Activated naive CD4-positive, alpha-beta T cell treated with anti-CD3 and anti-CD28 coated beads for 36 hours (primary cell): ENCODE measurements at regions of chr11 and their contacts with region 1.

Region 1: DNA sequence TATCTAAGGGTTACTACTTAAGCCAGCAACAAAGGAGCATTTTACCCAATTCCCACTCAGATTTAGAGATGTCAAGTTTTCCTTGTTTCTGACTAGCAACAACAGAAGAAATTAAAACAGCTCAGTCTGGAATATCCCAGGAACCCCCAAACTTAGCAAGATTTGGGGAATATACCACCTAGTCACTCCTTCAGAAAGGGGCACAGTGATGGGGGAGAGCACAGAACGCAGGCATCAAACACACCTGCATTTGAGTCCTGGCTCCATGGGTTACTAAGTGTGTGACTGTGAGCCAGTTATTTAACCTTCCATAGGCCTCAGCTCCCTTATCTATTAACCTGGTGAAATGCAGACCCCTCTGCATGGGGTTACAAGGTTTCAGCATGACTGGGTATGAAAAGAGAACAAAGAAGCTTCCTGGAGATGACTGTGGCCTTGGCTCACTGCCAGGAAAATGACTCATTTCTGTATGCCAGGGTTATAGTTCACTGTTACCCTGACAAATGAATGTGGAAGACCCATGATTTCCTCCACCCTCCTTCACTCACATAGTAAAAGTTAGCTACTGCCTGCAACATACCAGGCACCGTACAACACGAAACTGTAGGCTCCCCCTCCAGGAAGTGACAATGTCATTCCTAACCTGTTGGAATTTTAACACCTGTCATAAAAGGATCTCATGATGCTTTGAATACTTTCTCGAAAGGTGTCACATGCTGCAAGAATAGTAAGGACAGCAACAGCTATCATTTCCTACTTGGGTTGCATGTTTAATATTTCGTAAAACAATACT is 79.6 kb downstream of the ME3 start:
- DNase-seq: peak; percentile 98
- H3K4me3 Mint-ChIP-seq: no peak overlapping the region
- H3K27ac Mint-ChIP-seq: peak overlapping the region; percentile 86
- H3K4me1 Mint-ChIP-seq: peaks cover 70% of the 10 kb centered on the region
- H3K27me3 Mint-ChIP-seq: no peaks in the 10 kb centered on the region

Region 2: GRCh38 chr11:85752890-85753581 is 839.8 kb before region 1 on chr11:
- CTCF ChIA-PET with region 1: no interaction called
- intact Hi-C with region 1: loop called (anchors 1 kb)
- DNase-seq: peak; percentile 94
- H3K4me3 Mint-ChIP-seq: peak overlapping the region; percentile 57
- H3K27ac Mint-ChIP-seq: peak overlapping the region; percentile 97
- H3K4me1 Mint-ChIP-seq: peaks cover 95% of the 10 kb centered on the region
- H3K27me3 Mint-ChIP-seq: no peaks in the 10 kb centered on the region

Region 3: GRCh38 chr11:86068951-86069407 is 523.9 kb before region 1 on chr11 and contains the start of gene PICALM:
- CTCF ChIA-PET with region 1: no interaction called
- intact Hi-C with region 1: loop called (anchors 2 kb)
- DNase-seq: peak; percentile 99
- H3K4me3 Mint-ChIP-seq: peak within 1 kb of the TSS; percentile 95
- H3K27ac Mint-ChIP-seq: peak within 1 kb of the TSS; percentile 95
- H3K4me1 Mint-ChIP-seq: peaks cover 29% of the 10 kb centered on the region
- H3K27me3 Mint-ChIP-seq: no peaks in the 10 kb centered on the region
- total RNA-seq, gene PICALM: 38.6 to 42.3 TPM

Region 4: DNA sequence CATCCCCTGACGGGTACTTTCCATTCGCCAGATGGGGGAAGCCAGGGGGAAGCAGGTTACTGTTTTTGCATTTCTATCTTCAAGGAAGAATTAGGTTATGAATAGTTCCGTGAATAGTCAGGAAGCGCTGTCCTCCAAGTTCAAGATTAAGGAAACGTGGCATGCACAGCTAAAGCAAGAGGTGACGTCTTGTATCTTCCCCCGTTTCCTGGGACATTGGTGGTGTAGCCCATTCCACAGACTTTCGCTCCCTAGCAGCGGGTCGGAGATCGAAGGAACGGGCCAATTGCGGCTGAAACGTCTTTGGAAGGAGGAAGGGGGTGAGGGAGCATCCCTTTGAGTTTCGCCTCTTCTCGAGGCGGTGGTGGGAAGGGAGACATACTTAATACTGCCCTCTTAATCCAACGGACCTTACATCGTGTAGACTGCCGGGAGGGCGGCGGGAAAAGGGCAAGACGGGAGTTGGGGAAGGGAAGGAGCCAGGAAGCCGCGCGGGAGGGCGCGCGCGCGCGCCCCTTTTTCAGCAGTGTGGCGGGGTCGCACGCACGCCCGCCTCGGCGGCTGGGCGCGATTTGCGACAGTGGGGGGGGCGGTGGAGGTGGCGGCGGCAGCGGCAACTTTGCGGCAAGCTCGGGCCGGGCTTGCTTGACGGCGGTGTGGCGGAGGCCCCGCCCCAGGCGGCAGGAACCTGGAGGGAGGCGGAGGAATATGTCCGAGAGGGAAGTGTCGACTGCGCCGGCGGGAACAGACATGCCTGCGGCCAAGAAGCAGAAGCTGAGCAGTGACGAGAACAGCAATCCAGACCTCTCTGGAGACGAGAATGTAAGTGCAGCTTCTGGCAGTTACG is 348.1 kb before region 1 on chr11 and contains the start of gene EED:
- CTCF ChIA-PET with region 1: no interaction called
- intact Hi-C with region 1: loop called (anchors 5 kb)
- DNase-seq: peak; percentile 94
- H3K4me3 Mint-ChIP-seq: no peak within 1 kb of the TSS
- H3K27ac Mint-ChIP-seq: no peak within 1 kb of the TSS
- H3K4me1 Mint-ChIP-seq: peaks cover 35% of the 10 kb centered on the region
- H3K27me3 Mint-ChIP-seq: no peaks in the 10 kb centered on the region
- total RNA-seq, gene EED: 60.4 to 61.0 TPM

Region 5: GRCh38 chr11:86608251-86608799 is 15.5 kb after region 1 on chr11:
- CTCF ChIA-PET with region 1: interaction called, 46 read pairs
- intact Hi-C with region 1: no loop called
- DNase-seq: peak; percentile 70
- H3K4me3 Mint-ChIP-seq: no peak overlapping the region
- H3K27ac Mint-ChIP-seq: no peak overlapping the region
- H3K4me1 Mint-ChIP-seq: peaks cover 29% of the 10 kb centered on the region
- H3K27me3 Mint-ChIP-seq: no peaks in the 10 kb centered on the region

Region 6: GRCh38 chr11:86848861-86849260 is 256.0 kb after region 1 on chr11:
- CTCF ChIA-PET with region 1: no interaction called
- intact Hi-C with region 1: no loop called
- DNase-seq: no peak
- H3K4me3 Mint-ChIP-seq: no peak overlapping the region
- H3K27ac Mint-ChIP-seq: no peak overlapping the region
- H3K4me1 Mint-ChIP-seq: no peaks in the 10 kb centered on the region
- H3K27me3 Mint-ChIP-seq: peaks cover 1% of the 10 kb centered on the region

Region 7: GRCh38 chr11:87037450-87038234 is 444.8 kb after region 1 on chr11 and contains the start of gene TMEM135:
- CTCF ChIA-PET with region 1: no interaction called
- intact Hi-C with region 1: loop called (anchors 1 kb)
- DNase-seq: peak; percentile 95
- H3K4me3 Mint-ChIP-seq: peak within 1 kb of the TSS; percentile 98
- H3K27ac Mint-ChIP-seq: peak within 1 kb of the TSS; percentile 88
- H3K4me1 Mint-ChIP-seq: peaks cover 32% of the 10 kb centered on the region
- H3K27me3 Mint-ChIP-seq: no peaks in the 10 kb centered on the region
- total RNA-seq, gene TMEM135: 21.8 to 24.8 TPM